K562 (cell line): ENCODE measurements at regions of chr11 and their contacts with region 1.

Region 1: DNA sequence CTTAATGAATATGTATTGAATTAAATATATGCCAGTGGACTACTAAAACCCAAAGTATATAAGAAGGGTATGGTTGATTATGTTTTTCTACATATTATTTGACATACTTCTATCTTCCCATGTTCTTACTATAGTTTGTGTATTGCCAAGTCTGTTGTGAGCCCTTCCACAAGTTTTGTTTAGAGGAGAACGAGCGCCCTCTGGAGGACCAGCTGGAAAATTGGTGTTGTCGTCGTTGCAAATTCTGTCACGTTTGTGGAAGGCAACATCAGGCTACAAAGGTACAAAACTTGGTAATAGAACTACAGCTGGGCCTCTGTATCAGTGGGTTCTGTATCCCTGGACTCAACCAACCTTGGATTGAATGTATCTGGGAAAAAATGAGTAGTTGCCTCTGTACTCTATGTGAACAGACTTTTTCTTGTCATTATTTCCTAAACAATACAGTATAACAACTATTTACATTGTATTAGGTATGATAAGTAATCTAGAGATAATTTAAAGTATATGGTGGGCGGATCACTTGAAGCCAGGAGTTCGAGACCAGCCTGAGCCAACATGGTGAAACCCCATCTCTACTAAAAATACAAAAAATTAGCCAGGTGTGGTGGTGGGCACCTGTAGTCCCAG is 38.7 kb upstream of the TTC36 start:
- DNase-seq: peak; percentile 62 to 82 (median 66)
- ATAC-seq: peak; percentile 89
- H3K4me3 ChIP-seq: no peak overlapping the region
- H3K27ac ChIP-seq: no peak overlapping the region
- H3K4me1 ChIP-seq: no peaks in the 10 kb centered on the region
- H3K27me3 ChIP-seq: no peaks in the 10 kb centered on the region
- CTCF ChIP-seq: peak; percentile 76 to 91 (median 84)
- EP300 ChIP-seq: no peak
- POLR2A ChIP-seq: no peak
- RAD21 ChIP-seq: peak; percentile 81 to 87

Region 2: GRCh38 chr11:118145285-118146227 is 343.0 kb before region 1 on chr11:
- CTCF ChIA-PET with region 1: interaction called, 15 read pairs
- POLR2A ChIA-PET with region 1: no interaction called
- in situ Hi-C with region 1: no loop called
- intact Hi-C with region 1: no loop called
- DNase-seq: peak; percentile 87 to 96 (median 94)
- ATAC-seq: peak; percentile 97
- H3K4me3 ChIP-seq: peak overlapping the region; percentile 46
- H3K27ac ChIP-seq: no peak overlapping the region
- H3K4me1 ChIP-seq: peaks cover 0 to 11% of the 10 kb centered on the region in 2 experiments; a peak in 3 of 5 replicates
- H3K27me3 ChIP-seq: peaks cover 7 to 62% of the 10 kb centered on the region in 2 experiments; a peak in 4 of 5 replicates
- CTCF ChIP-seq: peak; percentile 86 to 93 (median 92)
- EP300 ChIP-seq: no peak
- POLR2A ChIP-seq: no peak
- RAD21 ChIP-seq: peak; percentile 94 to 96

Region 3: DNA sequence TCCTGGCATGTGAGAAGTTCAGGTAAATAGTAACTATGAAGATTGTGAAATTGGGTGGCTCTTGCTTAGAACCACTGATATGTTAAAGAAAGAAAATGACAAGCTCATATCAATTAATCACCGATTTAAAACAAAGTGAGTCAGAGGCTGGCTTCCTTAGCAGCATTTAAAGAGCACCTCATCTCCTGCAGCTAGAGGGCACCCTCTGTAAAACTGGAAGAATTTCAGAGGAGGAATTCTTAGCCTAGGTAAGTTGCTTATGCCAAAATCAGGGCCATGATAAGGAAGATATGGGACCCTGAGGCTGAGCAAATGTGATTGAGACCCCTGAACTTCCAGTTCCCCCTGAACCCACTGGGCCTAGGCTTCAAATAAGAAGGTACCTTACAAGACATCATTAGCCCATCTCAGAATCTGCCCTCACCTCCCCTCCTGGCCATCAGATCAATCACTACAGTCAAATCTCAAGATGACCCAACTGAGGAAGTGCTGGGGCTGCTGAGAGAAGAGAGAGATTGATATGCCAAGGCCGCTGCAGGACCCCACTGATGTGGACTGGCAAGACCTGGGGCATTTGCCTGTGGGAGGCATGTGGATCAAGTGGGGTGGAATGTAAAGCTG is 192.7 kb before region 1 on chr11:
- CTCF ChIA-PET with region 1: interaction called, 4 read pairs
- POLR2A ChIA-PET with region 1: no interaction called
- in situ Hi-C with region 1: no loop called
- intact Hi-C with region 1: loop called (anchors 5 kb)
- DNase-seq: peak in 2 of 4 experiments; percentile 32 to 50
- ATAC-seq: peak; percentile 77
- H3K4me3 ChIP-seq: no peak overlapping the region
- H3K27ac ChIP-seq: no peak overlapping the region
- H3K4me1 ChIP-seq: no peaks in the 10 kb centered on the region; a peak in 1 of 5 replicates
- H3K27me3 ChIP-seq: peaks cover 4 to 10% of the 10 kb centered on the region in 2 experiments; a peak in 2 of 5 replicates
- CTCF ChIP-seq: peak; percentile 57 to 81 (median 61); a peak in 5 of 6 replicates
- EP300 ChIP-seq: no peak
- POLR2A ChIP-seq: no peak
- RAD21 ChIP-seq: peak; percentile 70 to 85

Region 4: GRCh38 chr11:118380571-118380970 is 108.0 kb before region 1 on chr11:
- CTCF ChIA-PET with region 1: no interaction called
- POLR2A ChIA-PET with region 1: no interaction called
- in situ Hi-C with region 1: no loop called
- intact Hi-C with region 1: loop called (anchors 5 kb)
- DNase-seq: no peak
- ATAC-seq: no peak
- H3K4me3 ChIP-seq: no peak overlapping the region
- H3K27ac ChIP-seq: no peak overlapping the region
- H3K4me1 ChIP-seq: no peaks in the 10 kb centered on the region
- H3K27me3 ChIP-seq: no peaks in the 10 kb centered on the region
- CTCF ChIP-seq: no peak
- EP300 ChIP-seq: no peak
- POLR2A ChIP-seq: no peak
- RAD21 ChIP-seq: no peak

Region 5: DNA sequence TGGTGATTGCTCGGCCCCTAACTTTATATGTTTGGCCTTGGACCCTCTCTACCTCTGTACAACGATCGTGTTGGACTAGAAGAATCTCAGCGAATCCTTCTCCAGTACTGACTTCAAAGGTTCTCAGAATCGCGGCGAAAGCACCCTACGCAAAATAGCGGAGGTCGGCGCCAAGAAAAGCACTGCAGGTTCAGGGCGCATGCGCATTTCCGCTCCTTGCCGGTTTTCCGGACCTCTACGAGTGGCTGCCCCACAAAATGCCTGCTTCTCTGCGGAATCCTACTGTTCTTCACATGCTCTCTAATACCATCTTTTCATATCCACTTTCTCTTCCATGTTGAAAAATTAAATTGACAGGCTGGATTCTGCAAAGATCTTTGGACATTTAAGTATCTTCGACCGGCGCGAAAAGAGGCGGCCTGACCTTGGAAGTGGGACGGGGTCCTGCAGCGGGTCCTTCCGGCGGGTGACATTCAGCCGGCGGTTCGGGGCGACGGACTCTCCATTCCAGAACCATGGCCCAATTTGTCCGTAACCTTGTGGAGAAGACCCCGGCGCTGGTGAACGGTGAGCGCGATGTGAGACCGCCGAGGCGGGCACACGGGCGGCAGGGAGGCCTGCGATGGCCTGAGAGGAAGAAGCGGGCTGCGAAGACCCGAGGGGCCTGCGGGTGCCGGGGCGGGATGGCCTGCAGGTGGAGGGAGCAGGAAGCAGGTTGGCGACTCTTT is 87.3 kb before region 1 on chr11 and contains the start of gene ATP5MG:
- CTCF ChIA-PET with region 1: no interaction called
- POLR2A ChIA-PET with region 1: interaction called, 3 read pairs
- in situ Hi-C with region 1: no loop called
- intact Hi-C with region 1: loop called (anchors 2 kb)
- DNase-seq: peak; percentile 90 to 94 (median 91)
- ATAC-seq: peak; percentile 82
- H3K4me3 ChIP-seq: peak within 1 kb of the TSS; percentile 95
- H3K27ac ChIP-seq: peak within 1 kb of the TSS; percentile 96
- H3K4me1 ChIP-seq: peaks cover 15 to 17% of the 10 kb centered on the region in 2 experiments; a peak in 4 of 5 replicates
- H3K27me3 ChIP-seq: no peaks in the 10 kb centered on the region
- CTCF ChIP-seq: peak in 2 of 3 experiments; percentile 1 to 8; a peak in 1 of 6 replicates
- EP300 ChIP-seq: no peak
- POLR2A ChIP-seq: peak; percentile 84
- RAD21 ChIP-seq: no peak; a peak in 1 of 4 replicates
- polyA plus RNA-seq, gene ATP5MG: 1,842 to 2,138 TPM

Region 6: DNA sequence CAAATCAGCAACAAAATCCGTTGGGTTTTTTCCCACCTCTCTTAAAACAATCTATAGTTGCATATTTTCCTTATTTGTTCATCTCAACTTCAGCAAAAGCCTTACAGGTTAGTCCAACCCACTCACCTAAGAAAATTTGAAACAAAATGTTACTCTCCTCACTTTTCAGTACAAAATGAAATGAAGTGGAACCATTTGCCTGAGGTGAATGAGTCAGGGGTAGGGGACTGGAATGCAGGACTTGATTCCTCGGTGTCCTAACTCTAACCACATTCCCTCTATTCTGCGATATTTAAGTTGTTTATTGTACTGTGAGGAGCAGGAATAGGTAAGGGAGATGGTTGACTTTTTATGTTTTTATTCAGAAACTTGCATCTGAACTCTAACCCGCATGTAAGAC is 70.8 kb before region 1 on chr11:
- CTCF ChIA-PET with region 1: no interaction called
- POLR2A ChIA-PET with region 1: no interaction called
- in situ Hi-C with region 1: no loop called
- intact Hi-C with region 1: no loop called
- DNase-seq: no peak
- ATAC-seq: no peak
- H3K4me3 ChIP-seq: no peak overlapping the region
- H3K27ac ChIP-seq: no peak overlapping the region
- H3K4me1 ChIP-seq: peaks cover 4 to 20% of the 10 kb centered on the region in 2 experiments; a peak in 3 of 5 replicates
- H3K27me3 ChIP-seq: no peaks in the 10 kb centered on the region
- CTCF ChIP-seq: no peak
- EP300 ChIP-seq: no peak
- POLR2A ChIP-seq: no peak
- RAD21 ChIP-seq: no peak

Region 7: GRCh38 chr11:118435893-118436624 is 52.5 kb before region 1 on chr11 and contains the start of gene KMT2A:
- CTCF ChIA-PET with region 1: no interaction called
- POLR2A ChIA-PET with region 1: no interaction called
- in situ Hi-C with region 1: no loop called
- intact Hi-C with region 1: loop called (anchors 2 kb)
- DNase-seq: peak; percentile 94 to 98 (median 94)
- ATAC-seq: peak; percentile 69
- H3K4me3 ChIP-seq: peak within 1 kb of the TSS; percentile 91
- H3K27ac ChIP-seq: peak within 1 kb of the TSS; percentile 89
- H3K4me1 ChIP-seq: peaks cover 32 to 37% of the 10 kb centered on the region in 2 experiments
- H3K27me3 ChIP-seq: no peaks in the 10 kb centered on the region
- CTCF ChIP-seq: no peak; a peak in 1 of 6 replicates
- EP300 ChIP-seq: 0 out of 2 replicates have a peak, but pooled peaks have one; percentile 7
- POLR2A ChIP-seq: peak; percentile 60; the same call in 1 of the 2 replicates
- RAD21 ChIP-seq: no peak
- polyA plus RNA-seq, gene KMT2A: 9.6 to 10.8 TPM

Region 8: DNA sequence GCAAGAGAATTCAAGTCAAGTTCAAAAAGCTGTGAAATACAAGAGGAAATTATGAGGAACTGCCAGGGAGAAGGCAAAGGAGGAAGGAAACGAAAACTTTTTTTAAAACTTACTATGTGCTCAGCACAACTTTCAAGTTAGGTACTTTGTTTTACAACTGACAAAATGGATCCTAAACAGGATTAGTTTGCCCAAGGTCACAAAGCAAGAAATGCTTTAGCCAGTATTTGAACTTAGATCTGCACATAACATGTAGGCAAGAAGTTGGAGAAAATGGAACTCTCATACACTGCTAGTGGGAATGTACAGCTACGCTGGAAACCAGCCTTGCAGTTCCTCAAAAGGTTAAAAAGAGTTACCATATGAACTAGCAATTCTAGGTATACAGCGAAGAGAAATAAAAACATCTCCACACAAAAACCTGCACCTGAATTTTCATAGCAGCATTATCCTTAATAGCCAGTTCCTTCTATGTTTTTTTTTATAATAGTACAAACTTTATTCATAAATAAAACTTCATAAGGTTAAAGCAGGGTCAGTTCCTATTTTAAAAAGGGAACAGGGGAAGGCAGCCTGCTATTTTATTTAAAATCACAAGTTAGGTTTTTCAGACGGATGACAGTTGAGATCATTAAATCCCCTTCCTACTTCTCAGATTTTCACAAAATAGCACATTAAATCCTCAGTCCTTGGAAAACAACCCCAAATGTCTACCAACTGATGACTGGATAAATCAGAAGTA is 283.1 kb after region 1 on chr11:
- CTCF ChIA-PET with region 1: no interaction called
- POLR2A ChIA-PET with region 1: no interaction called
- in situ Hi-C with region 1: no loop called
- intact Hi-C with region 1: no loop called
- DNase-seq: no peak
- ATAC-seq: no peak
- H3K4me3 ChIP-seq: no peak overlapping the region
- H3K27ac ChIP-seq: no peak overlapping the region
- H3K4me1 ChIP-seq: 0 out of 5 replicates have a peak, but pooled peaks cover 0 to 4% of the 10 kb centered on the region in 2 experiments
- H3K27me3 ChIP-seq: no peaks in the 10 kb centered on the region
- CTCF ChIP-seq: no peak
- EP300 ChIP-seq: no peak
- POLR2A ChIP-seq: no peak
- RAD21 ChIP-seq: no peak